ENCODE measurements at regions of chr3 and their contacts with region 1.

Region 1: GRCh38 chr3:53709860-53710674 is 136.2 kb downstream of the CHDH start:
- DNase-seq: peak; percentile 83
- ATAC-seq: peak; percentile 51

Region 2: DNA sequence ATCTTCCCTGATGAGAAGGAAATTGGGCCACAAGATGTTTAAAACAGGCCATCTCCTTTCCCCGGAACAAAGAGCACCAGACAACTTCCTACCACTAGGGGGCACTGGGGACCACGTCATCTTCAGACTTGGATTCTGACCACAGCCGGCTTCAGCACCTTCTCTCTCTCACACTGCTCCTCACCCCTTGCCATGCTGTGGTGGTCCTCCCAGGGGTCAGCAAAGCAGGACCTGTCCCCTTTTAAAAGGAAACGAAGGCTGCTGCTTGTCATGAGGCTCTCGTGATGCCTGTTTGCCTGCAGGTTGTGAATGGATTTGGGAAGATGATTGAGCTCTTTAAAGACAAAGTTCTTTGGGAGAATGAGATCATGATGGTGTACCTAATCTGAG is 596.1 kb before region 1 on chr3:
- intact Hi-C with region 1: loop called (anchors 10 kb)
- DNase-seq: peak; percentile 78
- ATAC-seq: peak; percentile 79

Region 3: DNA sequence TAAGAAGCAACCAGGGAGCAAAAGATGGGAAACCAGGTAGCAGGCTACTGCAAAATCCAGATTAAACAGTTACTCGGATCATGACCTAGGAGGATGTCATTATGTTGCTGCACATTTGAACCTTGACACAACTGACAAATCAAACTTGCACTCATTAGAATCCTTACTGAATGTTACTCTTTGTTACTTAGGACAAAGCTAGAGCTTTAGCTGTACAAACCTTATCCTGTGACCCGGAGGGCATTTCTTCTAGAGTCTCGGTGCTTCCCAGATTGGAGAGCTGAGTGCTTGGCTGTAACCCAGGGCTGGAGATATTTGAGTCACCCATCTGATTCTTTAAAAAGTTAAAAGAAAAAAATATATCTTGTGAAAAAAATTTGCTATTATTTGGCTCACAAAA is 406.1 kb before region 1 on chr3:
- intact Hi-C with region 1: loop called (anchors 1 kb)
- DNase-seq: no peak
- ATAC-seq: peak; percentile 17

Region 4: DNA sequence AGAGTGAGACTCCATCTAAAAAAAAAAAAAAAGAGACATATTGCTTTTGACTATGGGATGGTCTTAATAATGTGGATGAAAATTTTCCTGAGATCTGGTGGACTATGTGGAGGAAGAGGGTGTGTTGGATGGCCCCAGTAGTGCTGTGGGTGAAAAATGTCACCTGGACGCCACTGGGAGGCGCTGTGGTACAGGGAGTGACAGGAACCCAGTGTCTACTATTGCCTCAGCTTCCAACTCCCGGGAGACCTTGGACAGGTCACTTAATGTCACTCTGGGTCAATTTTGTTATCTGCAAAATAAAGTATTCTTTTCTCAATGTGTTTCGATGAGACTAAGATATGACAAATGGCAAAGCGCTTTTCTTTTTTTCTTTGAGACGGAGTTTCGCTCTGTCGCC is 335.0 kb before region 1 on chr3:
- intact Hi-C with region 1: loop called (anchors 5 kb)
- DNase-seq: no peak
- ATAC-seq: peak; percentile 67

Region 5: GRCh38 chr3:53677413-53677812 is 32.7 kb before region 1 on chr3:
- intact Hi-C with region 1: loop called (anchors 1 kb)
- DNase-seq: no peak
- ATAC-seq: peak; percentile 59

Measured in Right ventricle myocardium inferior (tissue), 1 donor.